ENCODE measurements at regions of chr22 and their contacts with region 1.

Region 1: GRCh38 chr22:36194971-36195370 is 6.6 kb downstream of the APOL4 start:
- DNase-seq: peak; percentile 25 to 54 (median 53)
- H3K4me3 ChIP-seq: no peak overlapping the region
- H3K4me3 Mint-ChIP-seq: no peak overlapping the region
- H3K27ac ChIP-seq: no peak overlapping the region
- H3K27ac Mint-ChIP-seq: no peak overlapping the region
- H3K4me1 ChIP-seq: peaks cover 19 to 22% of the 10 kb centered on the region in 2 donors
- H3K4me1 Mint-ChIP-seq: peaks cover 30% of the 10 kb centered on the region
- H3K27me3 ChIP-seq: no peaks in the 10 kb centered on the region
- H3K27me3 Mint-ChIP-seq: peaks cover 4 to 9% (median 6%) of the 10 kb centered on the region in 3 donors
- CTCF ChIP-seq: peak; percentile 80

Region 2: DNA sequence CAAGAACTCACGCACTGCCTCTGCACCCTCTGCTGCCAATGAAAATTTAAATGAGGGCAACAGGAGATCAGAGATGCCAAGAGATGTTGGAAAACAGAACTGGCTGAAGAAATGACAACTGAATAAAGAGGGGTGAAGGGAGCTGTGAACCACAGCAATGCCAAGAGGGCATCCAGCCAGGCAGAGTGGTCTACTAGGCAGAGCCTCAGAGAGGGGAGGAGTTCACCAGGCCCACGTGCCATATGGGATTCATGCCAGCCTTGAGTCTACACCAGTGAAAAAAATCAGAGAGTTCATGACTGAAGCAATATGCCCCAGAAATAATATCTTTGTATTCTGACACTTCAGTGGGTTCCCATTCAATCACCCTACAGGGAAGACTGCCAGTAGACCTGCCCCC is 39.9 kb after region 1 on chr22:
- intact Hi-C with region 1: loop called in 1 of 2 experiments (anchors 5 kb)
- DNase-seq: no peak
- H3K4me3 ChIP-seq: no peak overlapping the region
- H3K4me3 Mint-ChIP-seq: no peak overlapping the region
- H3K27ac ChIP-seq: no peak overlapping the region
- H3K27ac Mint-ChIP-seq: peak overlapping the region in 1 of 7 donors; percentile 6
- H3K4me1 ChIP-seq: peaks cover 20 to 40% of the 10 kb centered on the region in 2 donors
- H3K4me1 Mint-ChIP-seq: peaks cover 55% of the 10 kb centered on the region
- H3K27me3 ChIP-seq: no peaks in the 10 kb centered on the region
- H3K27me3 Mint-ChIP-seq: no peaks in the 10 kb centered on the region
- CTCF ChIP-seq: no peak

Region 3: DNA sequence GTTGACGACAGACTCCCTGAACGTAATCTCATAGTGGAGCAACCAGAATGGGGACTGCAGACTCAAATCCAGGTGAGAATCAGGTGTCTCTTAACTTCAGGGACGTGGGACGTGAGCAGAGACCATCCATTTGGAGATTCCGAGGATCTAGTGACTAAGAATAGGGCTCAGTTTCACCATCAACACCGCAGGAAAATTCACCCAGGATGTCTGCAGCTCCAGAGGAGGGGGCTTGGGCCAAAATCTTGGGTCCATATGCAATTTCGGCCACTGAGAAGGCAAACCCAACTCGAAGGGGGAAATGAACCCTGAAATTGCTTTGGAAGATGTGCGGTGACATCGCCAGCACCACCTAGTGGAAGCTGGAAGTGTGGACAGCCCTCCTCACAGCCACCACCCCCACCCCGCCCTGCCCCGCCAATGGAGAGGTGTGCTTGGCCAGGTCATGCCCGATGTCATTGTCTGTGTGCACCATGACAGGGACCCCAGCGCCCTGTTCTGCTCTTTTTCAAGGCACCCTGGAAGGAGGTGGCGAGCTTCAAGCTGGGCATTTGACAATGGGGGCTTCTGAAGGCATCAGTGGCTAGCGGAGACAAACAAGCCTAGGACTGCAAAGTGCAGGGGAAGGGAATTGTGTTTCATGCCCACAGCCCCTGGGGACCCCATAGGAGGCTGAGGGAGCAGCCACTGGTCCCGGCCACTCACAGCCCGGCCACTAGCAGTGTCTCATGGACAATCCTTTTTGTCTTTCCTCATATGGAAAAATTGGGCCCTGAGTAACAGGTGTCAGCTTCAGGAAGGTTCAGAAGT is 82.7 kb after region 1 on chr22:
- intact Hi-C with region 1: loop called (anchors 5 to 10 kb)
- DNase-seq: peak; percentile 60 to 68 (median 62)
- H3K4me3 ChIP-seq: no peak overlapping the region
- H3K4me3 Mint-ChIP-seq: no peak overlapping the region
- H3K27ac ChIP-seq: no peak overlapping the region
- H3K27ac Mint-ChIP-seq: peak overlapping the region in 1 of 7 donors; percentile 57
- H3K4me1 ChIP-seq: peaks cover 16 to 34% of the 10 kb centered on the region in 2 donors
- H3K4me1 Mint-ChIP-seq: peaks cover 32% of the 10 kb centered on the region
- H3K27me3 ChIP-seq: no peaks in the 10 kb centered on the region
- H3K27me3 Mint-ChIP-seq: peaks cover 0 to 2% (median 1%) of the 10 kb centered on the region in 3 donors
- CTCF ChIP-seq: peak; percentile 82

Measured in CD14-positive monocyte (primary cell).